Calu3 (cell line): ENCODE measurements at regions of chr7 and their contacts with region 1.

Region 1: GRCh38 chr7:75617634-75618234 is 121.0 kb downstream of the HIP1 start:
- DNase-seq: no peak
- H3K4me3 Mint-ChIP-seq: no peak overlapping the region
- H3K27ac Mint-ChIP-seq: no peak overlapping the region
- H3K4me1 Mint-ChIP-seq: no peaks in the 10 kb centered on the region
- H3K27me3 Mint-ChIP-seq: no peaks in the 10 kb centered on the region
- CTCF ChIP-seq: no peak

Region 2: GRCh38 chr7:75727881-75728592 is 110.3 kb after region 1 on chr7:
- CTCF ChIA-PET with region 1: no interaction called
- intact Hi-C with region 1: loop called (anchors 10 kb)
- DNase-seq: peak; percentile 64
- H3K4me3 Mint-ChIP-seq: no peak overlapping the region
- H3K27ac Mint-ChIP-seq: no peak overlapping the region
- H3K4me1 Mint-ChIP-seq: no peaks in the 10 kb centered on the region
- H3K27me3 Mint-ChIP-seq: no peaks in the 10 kb centered on the region
- CTCF ChIP-seq: no peak